CD4-positive, alpha-beta T cell (primary cell): ENCODE measurements at regions of chr1 and their contacts with region 1.

Region 1: DNA sequence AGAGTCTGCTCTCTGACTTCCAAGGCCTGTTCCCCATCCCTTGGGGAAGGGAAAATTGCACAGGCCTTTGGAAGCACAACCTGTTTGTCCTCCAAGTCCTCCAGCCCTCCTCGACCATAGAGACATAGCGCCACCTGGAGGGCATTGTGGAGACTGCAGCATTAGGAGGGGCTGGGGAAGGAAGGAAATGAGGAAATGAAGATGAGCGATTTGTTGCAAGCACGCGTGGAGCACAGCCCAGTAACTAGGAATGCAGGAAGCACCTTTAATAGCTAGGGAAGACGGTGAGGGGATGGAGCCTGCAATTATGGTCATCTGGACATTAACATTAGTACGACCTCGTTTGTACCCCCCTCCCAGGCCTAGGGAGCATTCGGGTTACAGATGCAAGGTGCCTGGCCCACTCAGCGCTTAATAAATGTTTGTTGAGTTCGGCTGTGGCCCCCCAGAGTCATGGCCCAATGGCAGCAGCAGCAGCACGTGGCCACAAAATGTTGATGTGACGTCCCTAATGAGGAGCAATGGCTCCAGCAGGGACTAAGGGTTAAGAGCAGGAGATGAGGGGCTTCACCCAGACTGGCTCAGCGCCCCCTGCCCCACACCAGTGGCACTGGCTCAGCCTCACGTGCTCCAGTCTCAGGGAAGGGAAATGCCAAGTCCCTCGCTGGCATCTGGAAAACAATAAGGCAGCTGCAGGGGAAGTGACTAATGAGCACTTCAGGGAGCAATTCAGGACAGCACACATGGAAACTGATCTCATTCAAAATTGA is 8.0 kb upstream of the CAMK2N1 start:
- DNase-seq: peak; percentile 68 to 89 (median 81)
- ATAC-seq: peak; percentile 95
- H3K4me3 ChIP-seq: no peak overlapping the region
- H3K4me3 Mint-ChIP-seq: no peak overlapping the region
- H3K27ac ChIP-seq: no peak overlapping the region
- H3K27ac Mint-ChIP-seq: no peak overlapping the region
- H3K4me1 ChIP-seq: peaks cover 9% of the 10 kb centered on the region
- H3K4me1 Mint-ChIP-seq: no peaks in the 10 kb centered on the region
- H3K27me3 ChIP-seq: peaks cover 2 to 4% of the 10 kb centered on the region in 2 experiments
- H3K27me3 Mint-ChIP-seq: no peaks in the 10 kb centered on the region
- CTCF ChIP-seq: peak; percentile 97

Region 2: GRCh38 chr1:20194757-20195461 is 299.1 kb before region 1 on chr1:
- CTCF ChIA-PET with region 1: no interaction called
- POLR2A ChIA-PET with region 1: no interaction called
- intact Hi-C with region 1: loop called in 1 of 2 experiments (anchors 5 kb)
- DNase-seq: peak; percentile 59 to 83 (median 70)
- ATAC-seq: peak; percentile 67
- H3K4me3 ChIP-seq: no peak overlapping the region
- H3K4me3 Mint-ChIP-seq: no peak overlapping the region
- H3K27ac ChIP-seq: no peak overlapping the region
- H3K27ac Mint-ChIP-seq: no peak overlapping the region
- H3K4me1 ChIP-seq: peaks cover 4% of the 10 kb centered on the region
- H3K4me1 Mint-ChIP-seq: no peaks in the 10 kb centered on the region
- H3K27me3 ChIP-seq: peaks cover 0 to 2% of the 10 kb centered on the region in 2 experiments
- H3K27me3 Mint-ChIP-seq: peaks cover 5% of the 10 kb centered on the region
- CTCF ChIP-seq: peak; percentile 72

Region 3: DNA sequence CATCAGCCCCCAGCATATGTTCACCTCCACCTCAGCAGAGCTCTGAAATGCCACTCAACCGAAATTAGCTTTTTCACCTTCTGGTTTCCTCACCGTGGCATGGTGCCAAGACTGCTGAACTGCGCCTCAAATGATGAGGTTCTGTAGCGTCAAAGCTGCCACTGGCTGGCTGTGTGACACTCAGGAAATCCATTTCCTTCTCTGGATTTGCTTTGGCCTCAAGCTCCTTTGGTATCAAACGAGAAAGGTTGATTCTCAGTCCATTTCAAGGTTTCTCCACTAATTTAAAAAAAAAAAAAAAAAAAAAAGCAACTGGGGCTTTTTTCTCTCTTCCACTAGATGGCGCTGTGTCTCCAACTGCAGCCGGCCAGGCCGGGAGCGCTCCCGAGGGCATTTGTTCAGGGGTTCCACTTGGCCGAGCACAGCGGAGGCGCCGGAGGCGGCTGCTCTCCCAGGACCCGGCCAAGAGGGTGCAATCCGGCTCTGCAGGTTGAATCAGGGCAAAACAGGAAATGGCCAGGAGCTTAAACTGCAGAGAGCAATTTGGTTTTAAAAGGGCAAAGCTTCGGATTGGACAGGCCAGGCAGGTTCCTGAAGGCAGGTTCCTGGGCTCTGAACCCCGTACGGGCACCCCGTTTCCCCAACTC is 281.2 kb before region 1 on chr1:
- CTCF ChIA-PET with region 1: interaction called, 5 read pairs
- POLR2A ChIA-PET with region 1: interaction called, 4 read pairs
- intact Hi-C with region 1: loop called (anchors 1 kb)
- DNase-seq: peak; percentile 11 to 77 (median 40)
- ATAC-seq: no peak
- H3K4me3 ChIP-seq: no peak overlapping the region
- H3K4me3 Mint-ChIP-seq: no peak overlapping the region
- H3K27ac ChIP-seq: no peak overlapping the region
- H3K27ac Mint-ChIP-seq: no peak overlapping the region
- H3K4me1 ChIP-seq: peaks cover 13% of the 10 kb centered on the region
- H3K4me1 Mint-ChIP-seq: no peaks in the 10 kb centered on the region
- H3K27me3 ChIP-seq: peaks cover 12 to 18% of the 10 kb centered on the region in 2 experiments
- H3K27me3 Mint-ChIP-seq: peaks cover 60% of the 10 kb centered on the region
- CTCF ChIP-seq: peak; percentile 81

Region 4: DNA sequence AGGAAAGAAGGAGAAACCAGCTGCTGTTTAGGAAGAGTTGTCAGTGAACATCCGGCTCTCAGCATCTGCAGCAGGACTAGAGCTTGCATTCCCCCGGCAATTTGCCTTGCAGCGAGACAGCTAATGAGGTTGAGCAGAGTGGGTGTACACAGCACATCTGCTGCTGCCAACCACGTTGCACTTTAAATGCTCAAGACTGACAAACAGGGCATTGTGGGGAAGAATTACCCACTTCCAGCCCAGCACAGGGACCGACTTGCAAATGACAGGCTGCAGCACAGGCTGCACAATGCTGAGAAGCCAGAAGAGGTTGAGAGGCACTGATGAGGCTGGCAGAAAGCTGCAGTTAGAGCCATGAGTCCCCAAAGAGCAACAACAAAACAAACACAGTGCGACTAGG is 260.2 kb before region 1 on chr1:
- CTCF ChIA-PET with region 1: no interaction called
- POLR2A ChIA-PET with region 1: no interaction called
- intact Hi-C with region 1: loop called in 1 of 2 experiments (anchors 1 kb)
- DNase-seq: no peak
- ATAC-seq: no peak
- H3K4me3 ChIP-seq: no peak overlapping the region
- H3K4me3 Mint-ChIP-seq: no peak overlapping the region
- H3K27ac ChIP-seq: no peak overlapping the region
- H3K27ac Mint-ChIP-seq: no peak overlapping the region
- H3K4me1 ChIP-seq: no peaks in the 10 kb centered on the region
- H3K4me1 Mint-ChIP-seq: no peaks in the 10 kb centered on the region
- H3K27me3 ChIP-seq: peaks cover 12 to 13% of the 10 kb centered on the region in 2 experiments
- H3K27me3 Mint-ChIP-seq: peaks cover 26% of the 10 kb centered on the region
- CTCF ChIP-seq: no peak

Region 5: GRCh38 chr1:20376880-20377494 is 117.0 kb before region 1 on chr1:
- CTCF ChIA-PET with region 1: no interaction called
- POLR2A ChIA-PET with region 1: no interaction called
- intact Hi-C with region 1: loop called (anchors 1 to 2 kb)
- DNase-seq: peak; percentile 10 to 66 (median 50)
- ATAC-seq: peak; percentile 84
- H3K4me3 ChIP-seq: no peak overlapping the region
- H3K4me3 Mint-ChIP-seq: no peak overlapping the region
- H3K27ac ChIP-seq: no peak overlapping the region
- H3K27ac Mint-ChIP-seq: no peak overlapping the region
- H3K4me1 ChIP-seq: peaks cover 3% of the 10 kb centered on the region
- H3K4me1 Mint-ChIP-seq: no peaks in the 10 kb centered on the region
- H3K27me3 ChIP-seq: peaks cover 5 to 11% of the 10 kb centered on the region in 2 experiments
- H3K27me3 Mint-ChIP-seq: peaks cover 74% of the 10 kb centered on the region
- CTCF ChIP-seq: peak; percentile 52